Left colon (tissue), 2 donors: ENCODE measurements at regions of chr5 and their contacts with region 1.

Region 1: GRCh38 chr5:112742424-112742823 is 4.7 kb downstream of the APC start:
- DNase-seq: no peak
- ATAC-seq: no peak

Region 2: GRCh38 chr5:112684737-112685136 is 57.7 kb before region 1 on chr5:
- intact Hi-C with region 1: loop called in 1 of 2 experiments (anchors 10 kb)
- DNase-seq: no peak
- ATAC-seq: no peak

Region 3: DNA sequence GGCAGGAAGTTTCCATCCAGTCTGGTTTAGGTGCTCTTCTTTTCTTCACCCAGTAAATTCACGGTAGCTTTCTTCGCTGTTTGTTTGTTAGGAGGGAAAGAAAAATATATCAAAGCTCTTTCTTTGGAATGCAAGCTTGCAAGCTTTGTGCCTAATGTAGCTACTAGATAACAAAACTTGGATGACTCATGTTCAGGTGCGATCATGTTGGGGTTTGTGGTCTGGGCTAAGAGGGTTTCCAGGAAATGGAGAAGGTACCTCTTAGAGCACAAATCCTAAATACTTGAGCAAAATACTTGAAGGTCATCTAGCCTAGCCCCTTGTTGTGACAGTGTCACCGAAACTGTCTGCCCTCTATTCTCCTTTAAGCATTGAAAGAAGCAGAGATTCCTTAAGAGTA is 136.3 kb after region 1 on chr5:
- intact Hi-C with region 1: no loop called
- DNase-seq: no peak
- ATAC-seq: no peak

Region 4: GRCh38 chr5:112923148-112923917 is 180.9 kb after region 1 on chr5:
- intact Hi-C with region 1: no loop called
- DNase-seq: no peak
- ATAC-seq: no peak

Region 5: DNA sequence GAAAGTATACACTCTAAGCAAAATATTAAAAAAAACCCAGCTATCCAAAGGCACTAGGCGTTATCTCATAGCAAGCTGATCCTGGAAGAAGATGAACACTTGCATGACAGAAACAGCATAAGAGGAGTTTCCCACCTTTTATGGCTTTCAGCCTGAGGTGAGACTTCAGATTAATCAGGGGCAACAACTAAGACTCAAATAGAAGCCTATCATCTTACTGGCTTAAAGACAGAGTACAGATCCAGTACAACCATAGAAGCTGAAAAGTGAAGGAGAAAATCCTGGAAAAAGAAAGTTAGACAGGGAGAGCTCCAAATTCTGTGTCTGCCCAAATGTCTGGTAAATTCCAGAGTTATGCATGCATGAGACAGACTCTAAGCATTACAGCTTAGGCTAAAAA is 1258.7 kb after region 1 on chr5:
- intact Hi-C with region 1: no loop called
- DNase-seq: no peak
- ATAC-seq: no peak